H1 (cell line): ENCODE measurements at regions of chr15 and their contacts with region 1.

Region 1: GRCh38 chr15:43218908-43219706 is 1.7 kb downstream of the EPB42 start:
- DNase-seq: peak in 1 of 2 experiments; percentile 77
- H3K4me3 ChIP-seq: no peak overlapping the region
- H3K27ac ChIP-seq: no peak overlapping the region
- H3K4me1 ChIP-seq: peaks cover 0 to 3% (median 1%) of the 10 kb centered on the region in 4 experiments; a peak in 3 of 7 replicates
- H3K27me3 ChIP-seq: peaks cover 0 to 2% (median 0%) of the 10 kb centered on the region in 4 experiments; a peak in 2 of 7 replicates
- CTCF ChIP-seq: peak; percentile 75 to 80 (median 79)
- EP300 ChIP-seq: no peak
- POLR2A ChIP-seq: no peak
- RAD21 ChIP-seq: peak; percentile 38 to 54; a peak in 3 of 4 replicates

Region 2: DNA sequence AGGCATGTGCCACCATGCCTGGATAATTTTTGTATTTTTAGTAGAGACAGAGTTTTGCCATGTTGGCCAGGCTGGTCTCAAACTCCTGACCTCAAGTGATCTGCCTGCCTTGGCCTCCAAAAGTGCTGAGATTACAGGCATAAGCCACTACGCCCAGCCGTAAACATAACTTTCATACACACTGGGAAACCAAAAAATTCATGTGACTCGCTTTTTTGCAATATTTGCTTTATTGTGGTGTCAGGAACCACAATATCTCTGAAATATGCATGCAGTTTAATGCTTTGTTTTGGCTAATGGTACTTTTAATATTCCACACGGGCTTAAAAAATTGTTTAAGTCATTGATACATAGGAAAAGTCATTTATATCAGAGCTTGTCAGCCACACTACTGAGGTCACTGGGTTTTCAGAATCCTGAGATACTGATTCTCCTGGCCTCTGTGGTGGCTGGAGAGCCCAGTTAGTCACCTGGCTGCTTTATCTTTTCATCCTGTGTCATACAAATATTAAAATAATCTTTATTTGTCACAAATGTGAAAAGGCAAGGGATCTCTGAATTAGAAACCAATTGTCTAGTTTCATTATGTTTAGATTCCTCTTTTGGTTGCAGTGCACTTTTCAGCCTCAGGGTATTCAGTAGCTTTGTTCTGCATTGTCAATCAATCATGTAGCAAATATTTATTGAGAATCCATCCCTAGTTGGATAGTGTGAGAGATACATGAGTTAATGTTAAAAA is 75.7 kb before region 1 on chr15:
- CTCF ChIA-PET with region 1: no interaction called
- POLR2A ChIA-PET with region 1: no interaction called
- DNase-seq: no peak
- H3K4me3 ChIP-seq: no peak overlapping the region
- H3K27ac ChIP-seq: no peak overlapping the region
- H3K4me1 ChIP-seq: no peaks in the 10 kb centered on the region
- H3K27me3 ChIP-seq: no peaks in the 10 kb centered on the region
- CTCF ChIP-seq: no peak
- EP300 ChIP-seq: no peak
- POLR2A ChIP-seq: no peak
- RAD21 ChIP-seq: no peak

Region 3: GRCh38 chr15:43204016-43204901 is 14.8 kb before region 1 on chr15:
- CTCF ChIA-PET with region 1: interaction called, 109 read pairs
- POLR2A ChIA-PET with region 1: interaction called, 3 read pairs
- DNase-seq: peak; percentile 44 to 67
- H3K4me3 ChIP-seq: no peak overlapping the region
- H3K27ac ChIP-seq: no peak overlapping the region
- H3K4me1 ChIP-seq: peaks cover 0 to 3% (median 0%) of the 10 kb centered on the region in 4 experiments; a peak in 1 of 7 replicates
- H3K27me3 ChIP-seq: no peaks in the 10 kb centered on the region
- CTCF ChIP-seq: peak; percentile 75 to 84 (median 77)
- EP300 ChIP-seq: no peak
- POLR2A ChIP-seq: no peak
- RAD21 ChIP-seq: peak; percentile 40 to 62; a peak in 3 of 4 replicates

Region 4: GRCh38 chr15:43230640-43231115 is 11.6 kb after region 1 on chr15:
- CTCF ChIA-PET with region 1: interaction called, 109 read pairs
- POLR2A ChIA-PET with region 1: interaction called, 3 read pairs
- DNase-seq: no peak
- H3K4me3 ChIP-seq: no peak overlapping the region
- H3K27ac ChIP-seq: no peak overlapping the region
- H3K4me1 ChIP-seq: no peaks in the 10 kb centered on the region
- H3K27me3 ChIP-seq: no peaks in the 10 kb centered on the region
- CTCF ChIP-seq: no peak
- EP300 ChIP-seq: no peak
- POLR2A ChIP-seq: no peak
- RAD21 ChIP-seq: no peak

Region 5: DNA sequence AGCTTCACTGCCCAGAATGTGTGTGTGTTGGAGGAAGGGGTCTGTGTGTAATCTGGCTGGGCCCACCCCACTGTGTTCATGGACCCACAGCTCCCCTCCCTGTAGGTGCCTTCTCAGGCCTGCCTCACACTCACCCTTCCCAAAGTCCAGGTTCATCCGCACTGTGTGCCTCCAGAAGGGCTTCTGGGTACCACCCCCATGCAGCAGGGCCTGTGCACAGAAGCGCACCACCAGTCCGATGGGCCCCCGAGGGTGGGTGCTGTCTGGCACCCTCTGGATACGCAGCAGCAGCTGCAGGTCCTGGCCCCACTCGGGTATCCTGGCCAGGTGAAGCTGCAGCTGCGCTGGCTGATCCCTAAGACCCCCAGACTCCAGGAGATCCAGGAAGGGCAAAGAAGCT is 60.4 kb after region 1 on chr15:
- CTCF ChIA-PET with region 1: interaction called, 178 read pairs
- POLR2A ChIA-PET with region 1: no interaction called
- DNase-seq: no peak
- H3K4me3 ChIP-seq: no peak overlapping the region
- H3K27ac ChIP-seq: no peak overlapping the region
- H3K4me1 ChIP-seq: no peaks in the 10 kb centered on the region
- H3K27me3 ChIP-seq: no peaks in the 10 kb centered on the region
- CTCF ChIP-seq: no peak
- EP300 ChIP-seq: no peak
- POLR2A ChIP-seq: no peak
- RAD21 ChIP-seq: no peak

Region 6: GRCh38 chr15:43302205-43302817 is 83.2 kb after region 1 on chr15:
- CTCF ChIA-PET with region 1: no interaction called
- POLR2A ChIA-PET with region 1: no interaction called
- DNase-seq: no peak
- H3K4me3 ChIP-seq: no peak within 1 kb of the TSS
- H3K27ac ChIP-seq: no peak within 1 kb of the TSS
- H3K4me1 ChIP-seq: peaks cover 0 to 4% (median 0%) of the 10 kb centered on the region in 4 experiments; a peak in 1 of 7 replicates
- H3K27me3 ChIP-seq: no peaks in the 10 kb centered on the region; a peak in 1 of 7 replicates
- CTCF ChIP-seq: no peak
- EP300 ChIP-seq: no peak
- POLR2A ChIP-seq: no peak
- RAD21 ChIP-seq: no peak